ENCODE measurements at regions of chr19 and their contacts with region 1.

Region 1: GRCh38 chr19:3075895-3076431 is 13.7 kb upstream of the TLE5 start:
- DNase-seq: no peak
- H3K4me3 ChIP-seq: no peak overlapping the region
- H3K27ac ChIP-seq: no peak overlapping the region
- H3K4me1 ChIP-seq: peaks cover 0 to 18% (median 14%) of the 10 kb centered on the region in 4 donors
- H3K27me3 ChIP-seq: no peaks in the 10 kb centered on the region
- CTCF ChIP-seq: peak; percentile 91 to 96 (median 94)
- EP300 ChIP-seq: no peak
- POLR2A ChIP-seq: no peak

Region 2: DNA sequence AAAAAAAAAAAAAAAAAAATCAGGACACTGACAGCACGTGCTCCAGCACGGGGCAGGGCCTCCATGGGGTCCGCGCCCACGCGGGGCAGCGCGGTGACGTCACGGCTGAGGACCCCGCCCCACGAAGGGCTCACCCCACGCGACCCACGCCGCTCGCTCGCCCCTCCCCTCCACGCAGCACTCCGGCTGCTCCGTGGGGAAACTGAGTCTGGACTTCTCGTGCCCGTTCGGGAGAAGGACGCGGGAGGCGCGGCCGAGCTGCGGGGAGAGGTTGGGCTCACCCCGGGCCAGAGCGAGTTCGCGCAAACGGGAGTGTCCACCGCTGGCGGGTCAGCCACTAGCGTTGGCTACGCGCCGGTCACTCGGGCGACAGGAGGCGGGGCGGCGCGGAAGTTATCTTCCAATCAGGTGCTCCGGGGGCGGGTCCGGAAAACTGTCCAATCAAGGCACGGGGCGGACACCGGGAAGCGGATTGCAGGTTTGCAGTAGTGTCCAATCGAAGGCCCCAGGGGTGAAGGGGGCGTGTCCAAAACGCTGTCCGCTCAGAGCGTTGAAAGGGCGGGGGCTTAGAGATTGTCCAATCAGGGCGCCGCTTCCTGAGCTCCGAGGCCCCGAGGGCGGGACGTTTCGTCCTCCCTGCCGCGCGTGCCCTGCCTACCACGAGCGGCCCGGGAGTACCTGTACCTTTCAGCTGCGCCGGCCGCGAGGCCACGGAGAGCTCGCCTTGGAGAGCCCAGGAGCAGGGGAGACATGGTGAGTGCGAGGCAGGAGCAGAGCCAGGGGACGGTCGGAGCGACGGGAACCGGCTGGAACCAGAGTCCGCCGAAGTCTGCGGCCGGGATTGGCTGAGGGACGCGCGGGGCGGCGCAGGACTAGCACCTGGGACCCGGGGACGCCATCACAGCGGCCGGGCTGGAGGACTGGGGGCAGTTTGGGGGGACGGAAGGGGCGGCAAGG is 175.4 kb before region 1 on chr19 and contains the start of gene ZNF57:
- intact Hi-C with region 1: no loop called
- DNase-seq: peak; percentile 100
- H3K4me3 ChIP-seq: peak within 1 kb of the TSS; percentile 61 to 83 (median 67)
- H3K27ac ChIP-seq: peak within 1 kb of the TSS; percentile 81 to 92 (median 86)
- H3K4me1 ChIP-seq: peaks cover 0 to 14% (median 9%) of the 10 kb centered on the region in 4 donors
- H3K27me3 ChIP-seq: no peaks in the 10 kb centered on the region
- CTCF ChIP-seq: no peak
- EP300 ChIP-seq: no peak
- POLR2A ChIP-seq: peak; percentile 37 to 42
- total RNA-seq, gene ZNF57: 1.4 to 6.1 (median 1.9) TPM

Region 3: DNA sequence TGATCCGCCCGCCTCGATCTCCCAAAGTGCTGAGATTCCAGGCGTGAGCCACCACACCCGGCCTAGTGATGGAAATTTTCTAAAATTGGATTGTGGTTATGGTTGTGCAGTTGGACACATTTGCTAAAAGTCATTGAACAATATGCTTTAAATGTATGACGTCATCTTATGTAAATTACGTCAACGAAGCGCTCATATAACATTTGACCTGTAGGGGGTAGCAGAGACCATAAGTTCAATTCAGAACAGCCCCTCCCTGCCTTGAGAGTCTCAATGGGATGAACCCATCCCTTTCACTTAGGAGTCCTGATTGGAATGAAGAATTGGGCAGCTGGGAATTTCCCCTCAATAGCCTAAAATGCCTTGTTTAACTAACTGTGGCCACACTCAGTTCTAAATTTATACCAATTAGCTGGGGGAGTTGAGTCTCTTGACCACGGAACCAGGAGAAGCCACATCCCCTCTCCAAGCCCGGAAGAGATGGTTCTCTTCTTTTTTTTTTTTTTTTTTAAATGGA is 113.9 kb before region 1 on chr19:
- intact Hi-C with region 1: loop called (anchors 2 kb)
- DNase-seq: no peak
- H3K4me3 ChIP-seq: peak overlapping the region in 1 of 4 donors; percentile 7
- H3K27ac ChIP-seq: no peak overlapping the region
- H3K4me1 ChIP-seq: peaks cover 0 to 3% (median 0%) of the 10 kb centered on the region in 4 donors
- H3K27me3 ChIP-seq: no peaks in the 10 kb centered on the region
- CTCF ChIP-seq: peak; percentile 69 to 96 (median 84)
- EP300 ChIP-seq: no peak
- POLR2A ChIP-seq: no peak

Region 4: GRCh38 chr19:3047425-3048189 is 28.4 kb before region 1 on chr19:
- intact Hi-C with region 1: no loop called
- DNase-seq: peak; percentile 97
- H3K4me3 ChIP-seq: peak overlapping the region; percentile 44 to 76 (median 57)
- H3K27ac ChIP-seq: peak overlapping the region; percentile 81 to 98 (median 94)
- H3K4me1 ChIP-seq: peaks cover 0 to 24% (median 21%) of the 10 kb centered on the region in 4 donors
- H3K27me3 ChIP-seq: no peaks in the 10 kb centered on the region
- CTCF ChIP-seq: no peak
- EP300 ChIP-seq: no peak
- POLR2A ChIP-seq: peak in 1 of 2 donors; percentile 22

Region 5: DNA sequence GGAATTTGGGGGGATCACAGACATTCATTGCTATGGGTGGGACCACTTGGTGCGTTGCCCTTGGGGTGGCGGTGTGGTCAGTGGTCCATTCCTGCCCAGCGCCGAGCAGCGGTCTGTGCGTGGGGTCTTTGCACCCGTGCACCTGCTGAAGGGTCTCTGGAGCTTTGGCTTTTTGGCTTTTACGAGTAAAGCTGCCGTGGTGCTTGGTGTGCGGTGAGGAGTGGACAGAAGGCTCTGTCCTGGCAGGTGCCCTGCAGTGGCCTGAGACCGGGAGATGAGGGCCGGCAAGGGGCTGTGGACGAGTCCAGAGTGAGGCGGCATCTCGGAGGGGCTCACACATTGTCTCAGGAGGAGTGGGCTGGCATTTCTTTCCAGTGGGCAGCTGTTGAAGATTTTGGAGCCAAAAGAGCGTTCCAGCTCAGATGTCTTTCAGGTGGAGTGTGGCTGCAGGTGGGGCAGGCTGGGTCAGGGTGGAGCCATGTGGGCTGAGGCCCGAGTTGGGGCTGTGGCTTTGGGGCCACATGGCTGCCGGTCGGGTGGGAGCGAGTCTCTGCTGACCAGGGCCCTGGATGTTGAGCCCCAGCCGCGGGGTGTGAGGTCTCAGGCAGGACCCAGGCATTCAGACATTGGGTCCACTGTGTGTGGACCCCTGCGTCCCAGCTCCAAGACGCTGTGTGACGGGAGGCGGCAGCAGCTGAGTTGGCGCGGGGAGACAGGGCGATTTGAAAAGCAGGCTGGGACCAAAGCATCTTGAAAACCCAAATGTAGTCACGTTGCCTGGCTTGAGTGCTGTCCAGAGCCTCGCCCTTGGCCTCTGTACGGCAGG is 29.9 kb after region 1 on chr19:
- intact Hi-C with region 1: loop called (anchors 1 kb)
- DNase-seq: no peak
- H3K4me3 ChIP-seq: no peak overlapping the region
- H3K27ac ChIP-seq: peak overlapping the region in 1 of 4 donors; percentile 18
- H3K4me1 ChIP-seq: peaks cover 0 to 50% (median 30%) of the 10 kb centered on the region in 4 donors
- H3K27me3 ChIP-seq: no peaks in the 10 kb centered on the region
- CTCF ChIP-seq: no peak
- EP300 ChIP-seq: no peak
- POLR2A ChIP-seq: no peak

Region 6: DNA sequence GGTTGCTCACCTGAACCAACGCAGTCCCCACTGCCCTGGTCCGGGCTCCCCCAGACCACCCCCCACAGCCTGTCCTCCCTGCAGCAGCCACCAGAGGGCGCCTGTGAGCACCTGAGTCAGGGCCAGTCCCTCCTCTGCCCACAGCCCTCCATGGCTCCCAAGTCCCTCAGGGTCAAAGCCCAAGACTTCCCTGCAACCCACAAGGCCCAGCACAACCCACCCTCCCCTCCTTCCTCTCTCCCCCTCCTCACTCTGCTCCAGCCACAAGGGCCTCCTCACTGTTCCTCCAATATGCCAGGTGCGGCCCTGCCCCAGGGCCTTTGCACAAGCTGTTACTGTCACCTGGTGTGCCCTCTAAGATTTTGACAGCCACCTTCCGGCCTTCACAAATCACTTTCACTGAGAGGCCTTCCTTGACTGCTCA is 70.7 kb after region 1 on chr19:
- intact Hi-C with region 1: no loop called
- DNase-seq: no peak
- H3K4me3 ChIP-seq: no peak overlapping the region
- H3K27ac ChIP-seq: no peak overlapping the region
- H3K4me1 ChIP-seq: no peaks in the 10 kb centered on the region
- H3K27me3 ChIP-seq: peaks cover 0 to 24% (median 0%) of the 10 kb centered on the region in 3 donors
- CTCF ChIP-seq: peak in 3 of 4 experiments; percentile 11 to 52 (median 13)
- EP300 ChIP-seq: no peak
- POLR2A ChIP-seq: no peak

Region 7: DNA sequence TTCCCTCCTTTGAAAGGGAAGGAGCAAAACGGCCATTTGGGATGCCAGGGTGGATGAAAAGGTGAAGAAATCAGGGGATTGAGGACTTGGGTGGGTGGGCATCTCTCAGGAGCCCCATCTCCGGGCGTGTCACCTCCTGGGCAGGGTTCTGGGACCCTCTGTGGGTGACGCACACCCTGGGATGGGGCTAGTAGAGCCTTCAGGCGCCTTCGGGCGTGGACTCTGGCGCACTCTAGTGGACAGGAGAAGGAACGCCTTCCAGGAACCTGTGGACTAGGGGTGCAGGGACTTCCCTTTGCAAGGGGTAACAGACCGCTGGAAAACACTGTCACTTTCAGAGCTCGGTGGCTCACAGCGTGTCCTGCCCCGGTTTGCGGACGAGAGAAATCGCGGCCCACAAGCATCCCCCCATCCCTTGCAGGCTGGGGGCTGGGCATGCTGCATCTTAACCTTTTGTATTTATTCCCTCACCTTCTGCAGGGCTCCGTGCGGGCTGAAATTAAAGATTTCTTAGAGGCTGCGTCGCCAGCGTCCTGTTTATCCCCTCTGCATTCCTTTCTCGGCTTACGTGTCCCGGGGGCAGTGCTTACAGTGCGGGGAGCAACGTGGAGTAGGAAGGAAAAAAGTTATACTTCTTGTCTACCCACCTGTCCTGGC is 87.4 kb after region 1 on chr19:
- intact Hi-C with region 1: loop called (anchors 5 kb)
- DNase-seq: peak; percentile 82
- H3K4me3 ChIP-seq: no peak overlapping the region
- H3K27ac ChIP-seq: no peak overlapping the region
- H3K4me1 ChIP-seq: peaks cover 0 to 5% (median 2%) of the 10 kb centered on the region in 4 donors
- H3K27me3 ChIP-seq: no peaks in the 10 kb centered on the region
- CTCF ChIP-seq: peak; percentile 76 to 95 (median 88)
- EP300 ChIP-seq: no peak
- POLR2A ChIP-seq: no peak